Right ventricle myocardium superior (tissue), 1 donor: ENCODE measurements at regions of chr17 and their contacts with region 1.

Region 1: DNA sequence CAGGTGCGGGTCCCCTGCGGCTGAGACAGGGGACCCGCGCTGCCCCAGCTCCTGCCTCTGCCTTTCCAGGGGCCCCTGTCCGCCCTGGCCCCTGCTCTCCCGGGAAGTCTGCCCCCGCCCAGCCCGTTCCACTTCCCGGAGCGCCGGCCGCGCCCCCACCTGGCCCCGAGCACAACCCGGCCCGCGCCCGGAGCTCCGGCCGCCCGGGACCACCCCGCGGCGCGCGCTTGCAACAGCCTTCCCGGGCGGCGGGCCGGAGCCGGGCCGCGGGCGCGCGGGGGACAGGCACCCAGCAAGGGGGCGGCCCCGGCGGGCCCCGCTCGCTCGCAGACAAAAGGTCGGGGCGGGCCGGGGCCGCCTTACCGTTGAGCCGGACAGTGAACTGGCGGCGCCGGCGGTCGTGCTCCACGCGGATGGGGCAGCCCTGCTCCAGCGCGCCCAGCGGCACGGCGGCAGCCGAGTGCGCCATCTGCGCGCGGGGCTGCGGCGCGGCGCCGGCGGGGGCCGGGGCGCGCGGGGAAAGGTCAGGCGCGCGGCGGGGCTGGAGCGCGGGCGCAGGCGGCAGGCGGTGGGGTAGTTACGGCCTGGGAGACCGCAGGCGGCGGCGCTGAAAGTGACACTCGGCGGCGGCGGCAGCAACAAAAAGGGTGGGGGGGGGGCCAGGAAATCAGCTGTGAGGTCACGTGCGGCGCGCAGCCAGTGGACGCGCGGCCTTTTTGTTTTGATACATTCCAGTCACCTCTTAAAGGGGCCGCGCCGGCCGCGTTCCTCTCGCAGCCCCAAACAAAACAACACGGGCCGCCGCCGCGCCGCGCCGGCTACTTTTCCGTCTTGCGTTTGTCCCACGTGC is at the start of gene NATD1:
- DNase-seq: peak; percentile 95
- ATAC-seq: peak; percentile 85
- total RNA-seq, gene NATD1: 19.1 TPM

Region 2: GRCh38 chr17:21119247-21119918 is 133.6 kb before region 1 on chr17:
- intact Hi-C with region 1: no loop called
- DNase-seq: peak; percentile 74
- ATAC-seq: peak; percentile 79

Region 3: GRCh38 chr17:21161498-21162393 is 91.3 kb before region 1 on chr17:
- intact Hi-C with region 1: loop called (anchors 10 kb)
- DNase-seq: no peak
- ATAC-seq: peak; percentile 59

Region 4: GRCh38 chr17:21194703-21195102 is 58.3 kb before region 1 on chr17:
- intact Hi-C with region 1: no loop called
- DNase-seq: peak; percentile 70
- ATAC-seq: peak; percentile 68